Activated T-helper 1 cell treated with anti-CD3 and anti-CD28 coated beads, Interleukin-12 subunit alpha, Interleukin-12 subunit beta, Interleukin-2, Interleukin-4 antibody, amounts not matched to agents 30 ng/mL and 10 ng/mL and 1 ng/mL, durations not matched to agents 14 hours and 24 hours and 36 hours (primary cell): ENCODE measurements at regions of chr10 and their contacts with region 1.

Region 1: DNA sequence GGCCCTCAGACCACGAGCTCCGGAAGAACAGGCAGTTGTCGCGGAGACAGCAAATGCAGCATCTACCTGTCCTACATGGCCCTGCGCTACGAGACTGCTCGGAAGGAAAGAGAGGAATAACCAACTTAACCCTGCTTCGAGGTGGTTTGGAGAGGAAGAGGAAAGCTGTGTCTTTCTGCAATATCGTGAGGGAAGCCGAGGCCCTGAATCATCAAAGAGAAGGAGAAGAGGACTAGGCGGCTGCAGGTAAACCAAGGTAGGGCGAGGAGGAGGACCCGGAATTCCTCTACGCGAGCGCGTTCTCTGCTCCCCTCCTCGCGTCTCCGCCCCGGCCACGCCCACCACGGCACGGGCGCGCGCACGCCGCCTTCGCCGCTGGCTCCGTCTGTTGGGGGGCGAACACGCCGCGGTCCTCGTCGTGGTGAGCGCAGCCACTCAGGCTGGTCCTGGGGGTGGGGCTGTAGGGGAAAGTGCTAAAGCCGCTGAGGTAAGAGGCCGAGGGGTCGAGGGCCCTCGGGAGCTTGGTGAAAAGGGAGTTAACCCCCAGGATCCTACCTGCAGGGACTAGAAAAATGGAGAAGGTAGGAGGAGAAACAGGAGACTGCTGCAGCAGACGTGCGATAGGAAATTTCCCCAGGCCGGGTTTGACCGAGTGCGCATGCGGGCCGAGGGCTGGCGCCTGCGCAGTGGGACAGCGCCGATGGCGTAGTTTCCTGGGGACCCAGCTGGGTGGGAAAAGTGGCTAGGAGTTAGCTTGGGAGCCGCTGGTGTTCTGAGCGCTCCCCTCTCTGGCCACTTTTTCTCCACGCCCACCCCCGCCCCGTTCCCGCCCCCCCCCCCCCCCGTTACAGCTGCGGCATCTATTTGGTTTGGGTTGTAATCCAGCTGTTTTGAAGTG is at the starts of genes ANAPC16 and ASCC1:
- DNase-seq: peak; percentile 94
- H3K4me3 Mint-ChIP-seq: peak within 1 kb of the TSS; percentile 98
- H3K27ac Mint-ChIP-seq: peak within 1 kb of the TSS; percentile 99
- H3K4me1 Mint-ChIP-seq: peaks cover 51% of the 10 kb centered on the region
- H3K27me3 Mint-ChIP-seq: peaks cover 2% of the 10 kb centered on the region
- total RNA-seq, gene ANAPC16: 80.0 and 81.6 TPM in 2 replicates
- total RNA-seq, gene ASCC1: 29.8 and 33.5 TPM in 2 replicates

Region 2: DNA sequence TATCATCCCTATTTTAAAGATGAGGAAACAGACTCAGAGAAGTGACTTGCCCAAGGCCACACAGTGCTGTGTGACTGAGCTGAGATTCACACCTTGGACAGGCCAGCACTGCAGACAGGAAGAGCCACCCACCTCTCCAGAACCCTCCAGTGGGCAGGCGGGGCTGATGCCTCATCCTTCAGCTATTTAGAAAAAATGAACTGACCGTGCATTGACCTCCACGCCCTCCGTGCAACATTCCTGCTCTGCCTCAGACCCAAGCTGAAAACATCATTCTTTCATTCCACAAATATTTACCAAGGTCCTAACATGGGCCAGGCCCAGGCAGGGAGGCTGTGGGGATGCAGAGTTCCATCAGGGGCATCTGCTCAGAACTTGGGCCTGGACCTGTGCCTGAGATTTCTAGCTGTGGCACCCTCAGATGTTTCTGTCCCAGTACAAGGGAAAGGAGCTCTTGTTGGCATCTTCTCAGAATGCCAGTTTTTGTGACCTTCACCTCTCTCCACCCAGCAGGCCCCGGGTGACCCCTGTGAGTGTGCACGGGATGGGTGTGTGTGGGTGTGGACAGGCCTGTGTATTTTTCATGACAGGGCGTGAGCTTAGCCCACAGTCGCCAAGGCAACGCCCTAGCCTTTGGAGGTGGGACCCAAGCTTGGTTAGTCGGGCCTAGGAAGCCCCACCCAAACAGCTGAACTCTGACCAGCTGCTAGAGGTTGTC is 449.0 kb before region 1 on chr10:
- intact Hi-C with region 1: loop called (anchors 2 kb)
- DNase-seq: no peak
- H3K4me3 Mint-ChIP-seq: peak overlapping the region; percentile 69
- H3K27ac Mint-ChIP-seq: peak overlapping the region; percentile 80
- H3K4me1 Mint-ChIP-seq: peaks cover 81% of the 10 kb centered on the region
- H3K27me3 Mint-ChIP-seq: no peaks in the 10 kb centered on the region

Region 3: DNA sequence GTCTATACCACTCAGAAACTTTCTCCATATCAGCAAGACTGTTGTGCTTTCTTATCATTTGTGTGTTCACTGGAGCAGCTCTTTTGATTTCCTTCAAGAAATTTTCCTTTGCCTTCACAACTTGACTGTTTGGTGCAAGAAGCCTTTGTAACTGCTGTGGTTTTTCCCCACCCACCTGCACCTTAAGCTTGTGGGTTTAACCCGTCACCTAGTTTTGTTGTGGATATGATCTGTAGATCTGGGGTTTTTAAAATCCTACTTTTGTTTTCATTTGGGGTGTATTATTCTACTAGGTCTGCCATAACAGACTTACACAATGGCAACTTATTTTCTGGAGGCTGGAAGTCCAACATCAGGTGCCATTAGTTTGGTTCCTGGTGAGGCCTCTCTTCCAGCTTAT is 282.2 kb before region 1 on chr10:
- intact Hi-C with region 1: loop called (anchors 10 kb)
- DNase-seq: peak; percentile 37
- H3K4me3 Mint-ChIP-seq: peak overlapping the region; percentile 32
- H3K27ac Mint-ChIP-seq: peak overlapping the region; percentile 66
- H3K4me1 Mint-ChIP-seq: peaks cover 17% of the 10 kb centered on the region
- H3K27me3 Mint-ChIP-seq: peaks cover 13% of the 10 kb centered on the region

Region 4: GRCh38 chr10:72088889-72089575 is 126.9 kb before region 1 on chr10:
- intact Hi-C with region 1: loop called (anchors 2 kb)
- DNase-seq: peak; percentile 47
- H3K4me3 Mint-ChIP-seq: peak overlapping the region; percentile 99
- H3K27ac Mint-ChIP-seq: peak overlapping the region; percentile 99
- H3K4me1 Mint-ChIP-seq: peaks cover 62% of the 10 kb centered on the region
- H3K27me3 Mint-ChIP-seq: no peaks in the 10 kb centered on the region

Region 5: GRCh38 chr10:72162978-72163377 is 52.9 kb before region 1 on chr10:
- intact Hi-C with region 1: loop called (anchors 1 kb)
- DNase-seq: no peak
- H3K4me3 Mint-ChIP-seq: peak overlapping the region; percentile 57
- H3K27ac Mint-ChIP-seq: peak overlapping the region; percentile 80
- H3K4me1 Mint-ChIP-seq: peaks cover 27% of the 10 kb centered on the region
- H3K27me3 Mint-ChIP-seq: no peaks in the 10 kb centered on the region

Region 6: GRCh38 chr10:72248468-72249151 is 32.7 kb after region 1 on chr10:
- intact Hi-C with region 1: loop called (anchors 1 kb)
- DNase-seq: peak; percentile 75
- H3K4me3 Mint-ChIP-seq: peak overlapping the region; percentile 76
- H3K27ac Mint-ChIP-seq: peak overlapping the region; percentile 98
- H3K4me1 Mint-ChIP-seq: peaks cover 83% of the 10 kb centered on the region
- H3K27me3 Mint-ChIP-seq: no peaks in the 10 kb centered on the region

Region 7: GRCh38 chr10:72260588-72261322 is 44.9 kb after region 1 on chr10:
- intact Hi-C with region 1: loop called (anchors 1 kb)
- DNase-seq: peak; percentile 81
- H3K4me3 Mint-ChIP-seq: peak overlapping the region; percentile 86
- H3K27ac Mint-ChIP-seq: peak overlapping the region; percentile 98
- H3K4me1 Mint-ChIP-seq: peaks cover 67% of the 10 kb centered on the region
- H3K27me3 Mint-ChIP-seq: no peaks in the 10 kb centered on the region